ENCODE measurements at regions of chr9 and their contacts with region 1.

Region 1: DNA sequence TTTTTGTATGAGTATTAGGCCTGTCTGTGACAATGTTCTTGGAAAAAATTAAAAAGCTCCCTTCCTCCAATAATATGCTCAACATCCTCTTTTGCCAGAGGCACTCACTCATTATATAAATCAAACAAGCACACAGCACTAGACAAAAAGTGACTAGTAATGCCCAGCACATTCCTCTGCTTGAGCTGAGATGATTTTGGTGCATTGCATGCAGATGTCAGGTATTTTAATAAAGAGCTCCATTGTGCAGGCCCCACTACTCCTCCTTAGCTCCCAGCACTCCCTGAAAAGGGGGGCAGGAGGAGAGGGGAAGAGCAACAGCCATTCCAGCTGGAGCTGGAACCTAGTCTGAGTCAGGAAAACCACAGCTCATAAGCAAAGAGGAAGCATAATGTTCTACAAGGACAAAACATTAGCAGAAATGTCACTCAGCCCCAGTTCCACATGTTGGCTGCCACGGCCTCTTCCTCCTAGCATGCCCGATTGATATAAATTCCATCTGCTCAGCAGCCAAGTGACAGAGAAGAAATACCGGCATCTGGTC is 348.5 kb downstream of the BNC2 start:
- DNase-seq: no peak
- ATAC-seq: peak; percentile 61 to 63
- H3K4me3 ChIP-seq: no peak overlapping the region
- H3K27ac ChIP-seq: peak overlapping the region in 2 of 4 donors; percentile 3 to 51
- H3K4me1 ChIP-seq: peaks cover 0 to 7% of the 10 kb centered on the region in 2 donors
- H3K27me3 ChIP-seq: no peaks in the 10 kb centered on the region
- CTCF ChIP-seq: no peak
- POLR2A ChIP-seq: no peak

Region 2: GRCh38 chr9:16417161-16417560 is 104.8 kb before region 1 on chr9:
- in situ Hi-C with region 1: loop called in 1 of 4 experiments (anchors 25 kb)
- intact Hi-C with region 1: no loop called
- DNase-seq: no peak
- ATAC-seq: peak in 1 of 2 donors; percentile 22
- H3K4me3 ChIP-seq: no peak overlapping the region
- H3K27ac ChIP-seq: peak overlapping the region in 3 of 4 donors; percentile 2 to 33 (median 8)
- H3K4me1 ChIP-seq: no peaks in the 10 kb centered on the region
- H3K27me3 ChIP-seq: no peaks in the 10 kb centered on the region
- CTCF ChIP-seq: no peak
- POLR2A ChIP-seq: no peak

Region 3: GRCh38 chr9:16475257-16475656 is 46.7 kb before region 1 on chr9:
- in situ Hi-C with region 1: no loop called
- intact Hi-C with region 1: no loop called
- DNase-seq: no peak
- ATAC-seq: no peak
- H3K4me3 ChIP-seq: no peak overlapping the region
- H3K27ac ChIP-seq: no peak overlapping the region
- H3K4me1 ChIP-seq: no peaks in the 10 kb centered on the region
- H3K27me3 ChIP-seq: no peaks in the 10 kb centered on the region
- CTCF ChIP-seq: no peak
- POLR2A ChIP-seq: no peak

Measured in gastrocnemius medialis (tissue), 4 donors.